Right cardiac atrium (tissue), 5 donors: ENCODE measurements at regions of chr6 and their contacts with region 1.

Region 1: DNA sequence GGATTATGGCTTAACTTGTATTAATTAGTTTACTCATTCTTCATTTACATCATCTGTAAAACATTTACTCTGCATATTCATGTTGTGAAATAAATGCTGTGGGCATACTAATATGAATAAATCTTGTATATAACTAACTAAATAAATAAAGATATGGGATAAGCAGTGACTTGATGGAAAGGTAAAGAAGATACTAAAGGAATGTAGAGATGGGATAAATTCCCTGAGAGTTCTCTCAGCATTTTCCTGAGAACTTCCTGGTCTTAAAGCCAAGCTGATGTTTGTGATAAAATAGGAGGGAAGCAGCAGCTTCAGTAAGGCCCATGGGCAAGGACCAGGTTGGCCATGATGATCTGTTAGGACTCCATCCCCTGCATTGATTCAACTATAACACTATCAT is 652.2 kb downstream of the RNF144B start:
- DNase-seq: no peak
- ATAC-seq: no peak
- H3K4me3 ChIP-seq: no peak overlapping the region
- H3K27ac ChIP-seq: no peak overlapping the region
- H3K4me1 ChIP-seq: peaks cover 4% of the 10 kb centered on the region
- H3K27me3 ChIP-seq: no peaks in the 10 kb centered on the region

Region 2: GRCh38 chr6:18816046-18816445 is 223.3 kb before region 1 on chr6:
- intact Hi-C with region 1: no loop called
- DNase-seq: no peak
- ATAC-seq: no peak
- H3K4me3 ChIP-seq: no peak overlapping the region
- H3K27ac ChIP-seq: no peak overlapping the region
- H3K4me1 ChIP-seq: no peaks in the 10 kb centered on the region
- H3K27me3 ChIP-seq: no peaks in the 10 kb centered on the region

Region 3: GRCh38 chr6:19050765-19051164 is 11.5 kb after region 1 on chr6:
- intact Hi-C with region 1: loop called in 1 of 4 experiments (anchors 1 kb)
- DNase-seq: no peak
- ATAC-seq: no peak
- H3K4me3 ChIP-seq: no peak overlapping the region
- H3K27ac ChIP-seq: no peak overlapping the region
- H3K4me1 ChIP-seq: no peaks in the 10 kb centered on the region
- H3K27me3 ChIP-seq: no peaks in the 10 kb centered on the region

Region 4: DNA sequence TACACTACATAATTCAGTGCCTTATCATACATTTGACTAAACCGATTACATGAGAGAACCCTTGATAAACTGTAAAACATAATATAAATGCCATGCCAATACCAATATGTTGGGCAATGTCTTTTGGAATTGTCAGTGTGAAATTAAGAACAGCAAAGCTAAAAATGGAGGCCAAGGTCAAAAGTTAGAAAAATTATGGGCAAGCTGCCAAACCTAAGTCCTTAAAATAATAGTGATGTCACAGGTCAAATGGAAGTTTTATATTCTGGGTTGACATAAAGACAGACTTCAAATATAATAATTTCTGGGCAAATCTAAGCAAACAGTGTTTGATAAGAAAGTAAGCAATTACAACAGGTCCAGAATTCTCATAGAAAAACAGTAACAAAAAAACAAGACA is 44.5 kb after region 1 on chr6:
- intact Hi-C with region 1: no loop called
- DNase-seq: no peak
- ATAC-seq: no peak
- H3K4me3 ChIP-seq: no peak overlapping the region
- H3K27ac ChIP-seq: no peak overlapping the region
- H3K4me1 ChIP-seq: no peaks in the 10 kb centered on the region
- H3K27me3 ChIP-seq: no peaks in the 10 kb centered on the region

Region 5: GRCh38 chr6:20159781-20160540 is 1120.7 kb after region 1 on chr6:
- intact Hi-C with region 1: no loop called
- DNase-seq: no peak
- ATAC-seq: no peak
- H3K4me3 ChIP-seq: no peak overlapping the region
- H3K27ac ChIP-seq: no peak overlapping the region
- H3K4me1 ChIP-seq: no peaks in the 10 kb centered on the region
- H3K27me3 ChIP-seq: no peaks in the 10 kb centered on the region